ENCODE measurements at regions of chr11 and their contacts with region 1.

Region 1: DNA sequence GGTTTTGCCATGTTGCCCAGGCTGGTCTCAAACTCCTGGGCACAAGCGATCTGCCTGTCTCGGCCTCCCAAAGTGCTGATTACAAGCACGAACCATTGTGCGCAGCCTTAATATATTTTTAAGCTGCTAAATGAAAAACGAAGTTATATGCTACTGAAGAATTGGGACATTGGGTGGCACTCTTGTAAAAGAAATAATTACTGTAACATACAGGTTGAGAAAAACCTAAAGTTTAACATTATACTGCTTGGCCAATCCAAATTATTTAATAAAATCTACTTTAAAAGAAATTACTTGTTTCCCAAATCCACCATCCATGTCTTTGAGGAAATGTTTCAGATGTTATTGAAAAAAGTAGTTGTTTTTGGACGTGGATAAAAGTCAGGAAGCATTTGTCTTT is 37.9 kb upstream of the ARHGAP32 start:
- DNase-seq: no peak
- ATAC-seq: no peak
- H3K4me3 ChIP-seq: no peak overlapping the region
- H3K27ac ChIP-seq: no peak overlapping the region
- H3K4me1 ChIP-seq: no peaks in the 10 kb centered on the region
- CTCF ChIP-seq: peak; percentile 34; the same call in 2 of the 3 replicates
- EP300 ChIP-seq: no peak
- POLR2A ChIP-seq: no peak
- RAD21 ChIP-seq: peak; percentile 26 to 52; a peak in 3 of 5 replicates

Region 2: DNA sequence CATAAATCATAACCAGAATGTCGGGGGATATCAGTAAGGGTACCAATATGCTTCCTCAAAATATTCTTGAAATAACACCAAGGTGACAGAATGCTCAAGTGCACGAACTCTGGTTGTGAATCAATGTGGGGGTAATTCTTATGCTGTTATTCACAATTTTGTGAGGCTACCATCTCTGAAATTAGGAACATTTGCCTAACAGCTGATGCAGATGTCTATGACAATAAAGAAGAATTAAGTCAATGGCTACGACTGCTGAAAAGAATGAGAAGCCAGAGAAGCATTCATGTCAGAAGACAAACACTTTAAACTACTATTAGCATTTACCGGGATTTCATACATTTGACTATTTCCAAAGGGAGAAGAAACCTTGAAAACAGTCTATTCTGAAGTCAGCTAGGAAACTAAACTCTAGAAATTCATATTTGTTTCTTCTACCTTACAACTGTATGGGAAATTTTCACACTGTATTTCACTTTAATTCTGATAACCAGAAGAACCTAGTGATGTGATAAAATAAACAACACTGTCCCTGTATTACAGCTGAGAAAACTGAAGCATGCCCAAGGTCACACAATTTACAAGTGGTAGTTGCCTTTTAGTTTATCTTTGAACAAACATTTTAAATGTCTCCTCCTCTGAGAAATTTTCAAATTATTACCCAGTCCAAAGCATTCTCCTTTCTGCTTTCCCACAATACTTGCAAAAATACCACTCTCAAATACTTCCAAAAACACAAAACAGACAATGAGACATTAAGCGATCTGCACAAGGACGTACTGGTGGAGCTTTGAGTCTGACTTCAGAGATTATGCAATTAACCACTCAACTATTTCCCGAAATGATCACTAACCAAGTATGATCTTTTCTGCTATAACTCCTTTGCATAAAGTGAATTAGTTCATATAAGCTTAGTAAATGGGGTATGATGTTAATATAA is 19.8 kb before region 1 on chr11:
- CTCF ChIA-PET with region 1: no interaction called
- POLR2A ChIA-PET with region 1: no interaction called
- DNase-seq: no peak
- ATAC-seq: no peak
- H3K4me3 ChIP-seq: no peak overlapping the region
- H3K27ac ChIP-seq: no peak overlapping the region
- H3K4me1 ChIP-seq: peaks cover 5% of the 10 kb centered on the region; the same call in 2 of the 3 replicates
- CTCF ChIP-seq: no peak
- EP300 ChIP-seq: no peak
- POLR2A ChIP-seq: no peak
- RAD21 ChIP-seq: no peak

Region 3: GRCh38 chr11:129242855-129243254 is 12.8 kb after region 1 on chr11:
- CTCF ChIA-PET with region 1: no interaction called
- POLR2A ChIA-PET with region 1: no interaction called
- DNase-seq: no peak
- ATAC-seq: no peak
- H3K4me3 ChIP-seq: no peak overlapping the region
- H3K27ac ChIP-seq: no peak overlapping the region
- H3K4me1 ChIP-seq: peaks cover 16% of the 10 kb centered on the region
- CTCF ChIP-seq: no peak
- EP300 ChIP-seq: no peak
- POLR2A ChIP-seq: no peak
- RAD21 ChIP-seq: no peak

Region 4: DNA sequence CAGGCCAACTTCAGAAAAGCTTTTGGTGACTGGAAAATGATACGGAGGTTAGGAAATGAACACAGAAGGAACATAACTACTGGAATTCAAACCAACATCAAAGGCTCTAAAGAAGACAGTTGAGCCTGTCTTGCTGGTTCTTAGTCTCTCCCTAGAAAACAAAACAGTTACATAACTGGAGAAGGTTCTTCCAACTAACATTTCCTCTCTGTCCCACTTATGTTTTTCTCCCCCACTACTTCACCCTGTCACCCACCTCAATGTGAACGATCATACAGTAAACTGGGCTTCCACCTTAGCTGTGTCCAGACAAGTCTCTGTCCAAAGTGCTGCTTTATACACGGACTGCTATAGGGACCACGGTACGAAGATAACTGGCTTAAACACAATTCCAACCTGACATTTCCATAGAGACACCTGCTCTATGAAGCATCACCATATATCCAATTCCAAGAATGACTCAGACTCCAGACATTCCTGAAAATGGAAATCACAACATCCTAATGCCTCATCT is 47.3 kb after region 1 on chr11:
- CTCF ChIA-PET with region 1: no interaction called
- POLR2A ChIA-PET with region 1: no interaction called
- DNase-seq: no peak
- ATAC-seq: no peak
- H3K4me3 ChIP-seq: peak overlapping the region; percentile 84; the same call in 1 of the 3 replicates
- H3K27ac ChIP-seq: no peak overlapping the region
- H3K4me1 ChIP-seq: peaks cover 39% of the 10 kb centered on the region
- CTCF ChIP-seq: no peak
- EP300 ChIP-seq: no peak
- POLR2A ChIP-seq: no peak
- RAD21 ChIP-seq: no peak

Region 5: GRCh38 chr11:129331871-129332274 is 101.9 kb after region 1 on chr11:
- CTCF ChIA-PET with region 1: interaction called, 17 read pairs
- POLR2A ChIA-PET with region 1: no interaction called
- DNase-seq: peak; percentile 64 to 73
- ATAC-seq: peak; percentile 99
- H3K4me3 ChIP-seq: no peak overlapping the region
- H3K27ac ChIP-seq: peak overlapping the region in 1 of 2 experiments; percentile 36; a peak in 1 of 6 replicates
- H3K4me1 ChIP-seq: peaks cover 3% of the 10 kb centered on the region; the same call in 1 of the 3 replicates
- CTCF ChIP-seq: peak; percentile 79
- EP300 ChIP-seq: no peak
- POLR2A ChIP-seq: no peak
- RAD21 ChIP-seq: peak; percentile 91 to 94

Measured in A549 (cell line).